ENCODE measurements at regions of chr2 and their contacts with region 1.

Region 1: GRCh38 chr2:208040199-208041171 is 15.2 kb upstream of the PLEKHM3 start:
- DNase-seq: peak; percentile 38
- H3K4me3 ChIP-seq: no peak overlapping the region
- H3K27ac ChIP-seq: no peak overlapping the region
- H3K27me3 ChIP-seq: no peaks in the 10 kb centered on the region
- CTCF ChIP-seq: peak; percentile 89

Region 2: GRCh38 chr2:206858972-206859739 is 1181.3 kb before region 1 on chr2:
- CTCF ChIA-PET with region 1: no interaction called
- POLR2A ChIA-PET with region 1: no interaction called
- DNase-seq: no peak
- H3K4me3 ChIP-seq: no peak overlapping the region
- H3K27ac ChIP-seq: no peak overlapping the region
- H3K27me3 ChIP-seq: no peaks in the 10 kb centered on the region
- CTCF ChIP-seq: no peak

Region 3: GRCh38 chr2:207632575-207633493 is 407.7 kb before region 1 on chr2:
- CTCF ChIA-PET with region 1: interaction called, 10 read pairs
- POLR2A ChIA-PET with region 1: no interaction called
- DNase-seq: no peak
- H3K4me3 ChIP-seq: no peak overlapping the region
- H3K27ac ChIP-seq: no peak overlapping the region
- H3K27me3 ChIP-seq: no peaks in the 10 kb centered on the region
- CTCF ChIP-seq: no peak

Region 4: DNA sequence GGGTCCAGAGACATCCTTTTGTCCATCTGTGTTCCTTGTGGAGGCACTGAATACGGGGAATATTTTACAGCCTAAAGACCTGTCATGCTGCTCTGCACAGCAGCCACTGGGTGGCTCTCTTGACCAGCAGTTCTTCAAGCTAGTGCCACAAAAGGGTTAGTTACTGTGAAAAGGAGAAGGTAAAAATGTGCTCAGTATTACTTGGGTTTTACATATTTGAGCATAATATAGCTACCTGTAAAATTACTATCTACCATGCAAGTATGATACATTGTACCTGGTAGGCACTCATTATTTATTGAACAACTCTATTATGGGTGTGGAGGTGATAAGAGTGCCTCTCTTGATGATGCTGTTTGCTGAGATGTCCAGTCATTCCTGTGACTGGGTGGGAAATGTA is 294.4 kb before region 1 on chr2:
- CTCF ChIA-PET with region 1: interaction called, 228 read pairs
- POLR2A ChIA-PET with region 1: no interaction called
- DNase-seq: peak; percentile 53
- H3K4me3 ChIP-seq: no peak overlapping the region
- H3K27ac ChIP-seq: no peak overlapping the region
- H3K27me3 ChIP-seq: no peaks in the 10 kb centered on the region
- CTCF ChIP-seq: peak; percentile 96

Region 5: DNA sequence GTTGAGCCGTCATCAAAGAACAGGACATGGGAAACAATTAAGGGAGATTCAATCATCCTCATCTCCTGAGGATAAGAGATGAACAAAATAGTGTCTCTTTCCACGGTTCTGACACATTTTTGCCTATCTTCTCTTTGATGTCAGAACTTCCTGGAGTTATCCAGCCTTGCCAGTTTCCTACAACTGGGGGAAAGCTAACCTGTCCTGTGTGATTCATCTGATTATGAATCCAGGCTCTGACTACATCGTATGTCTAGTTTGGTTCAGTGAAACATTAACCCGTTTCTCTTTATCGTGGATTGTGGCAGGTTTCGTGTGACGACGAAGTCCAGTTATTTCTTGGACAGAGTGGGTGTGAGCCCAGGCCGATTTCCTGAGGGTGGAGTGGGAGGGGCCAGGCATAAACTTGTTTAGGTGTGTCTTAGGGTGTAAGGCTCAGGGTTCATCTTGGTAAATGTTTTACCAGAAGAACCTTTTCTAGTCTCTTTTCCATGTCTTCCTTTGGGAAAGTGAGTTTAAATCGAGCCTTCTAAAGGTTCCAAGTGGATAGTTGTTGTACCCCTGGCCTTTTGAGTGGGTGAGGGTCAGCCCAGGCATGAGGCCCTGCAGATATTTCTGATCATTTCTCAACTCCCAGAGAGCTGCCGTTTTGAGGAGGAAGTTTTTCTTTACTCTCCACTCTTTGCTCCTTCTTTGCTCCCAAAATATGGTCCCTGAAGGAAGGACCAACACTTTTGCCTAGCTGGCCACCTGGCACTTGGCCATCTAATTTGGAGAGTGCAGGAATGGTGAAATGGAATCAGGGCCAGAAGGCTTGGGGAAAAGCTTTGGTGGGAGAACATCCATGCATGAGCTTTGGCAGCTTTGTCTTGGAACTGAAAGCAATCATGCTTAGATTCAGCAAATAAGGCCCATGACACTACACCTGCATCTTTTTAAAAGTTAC is 220.4 kb before region 1 on chr2:
- CTCF ChIA-PET with region 1: interaction called, 12 read pairs
- POLR2A ChIA-PET with region 1: no interaction called
- DNase-seq: no peak
- H3K4me3 ChIP-seq: no peak overlapping the region
- H3K27ac ChIP-seq: no peak overlapping the region
- H3K27me3 ChIP-seq: no peaks in the 10 kb centered on the region
- CTCF ChIP-seq: no peak

Region 6: GRCh38 chr2:207974216-207974605 is 66.3 kb before region 1 on chr2:
- CTCF ChIA-PET with region 1: interaction called, 13 read pairs
- POLR2A ChIA-PET with region 1: no interaction called
- DNase-seq: no peak
- H3K4me3 ChIP-seq: no peak overlapping the region
- H3K27ac ChIP-seq: no peak overlapping the region
- H3K27me3 ChIP-seq: no peaks in the 10 kb centered on the region
- CTCF ChIP-seq: no peak

Region 7: GRCh38 chr2:208013285-208014178 is 27.0 kb before region 1 on chr2:
- CTCF ChIA-PET with region 1: interaction called, 27 read pairs
- POLR2A ChIA-PET with region 1: no interaction called
- DNase-seq: no peak
- H3K4me3 ChIP-seq: no peak overlapping the region
- H3K27ac ChIP-seq: no peak overlapping the region
- H3K27me3 ChIP-seq: no peaks in the 10 kb centered on the region
- CTCF ChIP-seq: no peak

Region 8: DNA sequence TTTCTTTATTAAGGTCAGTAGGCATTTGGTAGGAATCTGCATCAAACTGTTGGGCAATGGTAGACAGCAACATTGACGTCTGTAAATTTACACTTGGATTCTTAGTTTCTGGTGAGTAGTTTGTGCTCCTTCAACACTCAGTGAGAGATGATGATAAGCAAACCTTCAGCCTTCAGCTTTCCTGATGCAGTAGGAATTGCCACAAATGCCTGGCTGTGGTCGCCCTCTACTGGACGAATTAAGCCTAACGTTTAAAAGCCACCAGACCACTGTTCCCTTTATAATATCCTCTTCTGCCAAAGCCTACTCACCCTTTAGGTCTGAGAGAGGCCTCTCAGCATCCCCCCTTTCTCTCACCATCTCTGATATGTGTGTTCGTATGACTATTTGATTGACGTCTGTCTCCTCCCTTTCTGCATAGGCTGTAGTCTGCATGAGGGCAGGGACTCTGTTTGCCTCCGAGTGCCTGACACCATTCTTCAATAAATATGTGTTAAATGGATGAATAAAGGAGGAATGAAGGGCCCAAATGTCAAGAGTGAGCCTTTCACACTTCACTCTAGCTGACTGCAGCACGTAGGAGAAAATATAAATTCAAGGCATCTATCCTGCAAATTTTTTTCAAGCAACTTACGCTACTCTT is 31.9 kb after region 1 on chr2:
- CTCF ChIA-PET with region 1: interaction called, 56 read pairs
- POLR2A ChIA-PET with region 1: no interaction called
- DNase-seq: peak; percentile 50
- H3K4me3 ChIP-seq: no peak overlapping the region
- H3K27ac ChIP-seq: no peak overlapping the region
- H3K27me3 ChIP-seq: no peaks in the 10 kb centered on the region
- CTCF ChIP-seq: peak; percentile 75

Region 9: DNA sequence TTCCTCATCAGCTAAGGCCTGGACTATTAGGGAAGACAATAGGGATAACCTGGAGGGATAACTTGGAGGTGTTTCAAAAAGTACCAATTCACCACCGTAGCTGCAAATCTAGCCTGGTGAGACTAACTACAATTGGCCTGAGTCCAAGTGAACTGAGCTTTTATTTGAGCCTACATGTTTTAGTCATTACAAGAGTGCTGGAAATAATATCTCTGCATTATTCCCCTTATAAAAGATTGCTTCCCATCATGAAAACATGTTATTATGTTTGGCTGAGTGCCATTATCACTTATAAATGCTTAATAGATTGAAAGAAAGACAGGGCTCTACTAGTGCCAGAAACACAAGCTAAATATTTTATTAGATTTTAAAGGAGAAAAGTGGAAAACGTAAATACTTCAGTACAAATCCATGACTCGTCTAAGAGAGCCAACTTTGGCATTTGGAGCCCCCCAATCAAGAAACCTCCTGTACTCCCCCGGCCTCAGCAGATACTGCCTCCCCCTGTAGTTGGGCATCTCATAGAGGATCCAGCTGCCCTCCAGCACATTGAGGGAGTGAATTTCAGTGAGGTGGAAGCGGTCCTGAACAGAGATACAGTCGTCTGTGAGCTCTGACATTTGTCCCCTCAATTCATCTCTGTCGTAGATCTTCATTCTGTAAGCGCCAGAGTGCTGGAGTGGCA is 101.9 kb after region 1 on chr2:
- CTCF ChIA-PET with region 1: no interaction called
- POLR2A ChIA-PET with region 1: no interaction called
- DNase-seq: no peak
- H3K4me3 ChIP-seq: no peak overlapping the region
- H3K27ac ChIP-seq: no peak overlapping the region
- H3K27me3 ChIP-seq: no peaks in the 10 kb centered on the region
- CTCF ChIP-seq: no peak